Caco-2 (cell line): ENCODE measurements at regions of chr15 and their contacts with region 1.

Region 1: GRCh38 chr15:52790162-52790708 is at the start of gene ONECUT1:
- DNase-seq: peak; percentile 60 to 82
- H3K4me3 ChIP-seq: peak within 1 kb of the TSS; percentile 57
- H3K4me3 Mint-ChIP-seq: peak within 1 kb of the TSS; percentile 88
- H3K27ac Mint-ChIP-seq: no peak within 1 kb of the TSS
- H3K4me1 ChIP-seq: no peaks in the 10 kb centered on the region
- H3K4me1 Mint-ChIP-seq: no peaks in the 10 kb centered on the region
- H3K27me3 ChIP-seq: no peaks in the 10 kb centered on the region
- H3K27me3 Mint-ChIP-seq: peaks cover 5% of the 10 kb centered on the region
- CTCF ChIP-seq: no peak
- total RNA-seq, gene ONECUT1: 0.53 and 0.68 TPM in 2 replicates

Region 2: DNA sequence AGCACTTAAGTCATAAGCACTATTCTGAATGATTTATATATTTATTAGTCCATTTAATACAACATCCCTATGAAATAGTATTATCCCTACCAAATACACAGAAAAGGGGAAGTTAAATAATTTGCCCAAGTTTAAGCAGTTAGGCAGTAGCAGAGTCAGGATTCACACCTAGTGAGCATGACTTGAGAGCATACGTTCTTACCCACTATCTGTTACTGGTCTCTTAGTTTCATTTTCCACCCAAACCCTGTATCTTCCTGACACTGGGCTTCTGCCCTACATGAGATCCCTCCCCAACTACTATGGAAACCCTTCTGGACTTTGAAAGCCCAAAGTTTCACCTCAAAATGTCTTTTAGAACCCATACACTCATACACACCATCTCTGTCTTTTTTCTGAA is 106.7 kb before region 1 on chr15:
- CTCF ChIA-PET with region 1: no interaction called
- POLR2A ChIA-PET with region 1: no interaction called
- intact Hi-C with region 1: no loop called
- DNase-seq: no peak
- H3K4me3 ChIP-seq: no peak overlapping the region
- H3K4me3 Mint-ChIP-seq: no peak overlapping the region
- H3K27ac Mint-ChIP-seq: no peak overlapping the region
- H3K4me1 ChIP-seq: no peaks in the 10 kb centered on the region
- H3K4me1 Mint-ChIP-seq: no peaks in the 10 kb centered on the region
- H3K27me3 ChIP-seq: no peaks in the 10 kb centered on the region
- H3K27me3 Mint-ChIP-seq: peaks cover 8% of the 10 kb centered on the region
- CTCF ChIP-seq: no peak

Region 3: DNA sequence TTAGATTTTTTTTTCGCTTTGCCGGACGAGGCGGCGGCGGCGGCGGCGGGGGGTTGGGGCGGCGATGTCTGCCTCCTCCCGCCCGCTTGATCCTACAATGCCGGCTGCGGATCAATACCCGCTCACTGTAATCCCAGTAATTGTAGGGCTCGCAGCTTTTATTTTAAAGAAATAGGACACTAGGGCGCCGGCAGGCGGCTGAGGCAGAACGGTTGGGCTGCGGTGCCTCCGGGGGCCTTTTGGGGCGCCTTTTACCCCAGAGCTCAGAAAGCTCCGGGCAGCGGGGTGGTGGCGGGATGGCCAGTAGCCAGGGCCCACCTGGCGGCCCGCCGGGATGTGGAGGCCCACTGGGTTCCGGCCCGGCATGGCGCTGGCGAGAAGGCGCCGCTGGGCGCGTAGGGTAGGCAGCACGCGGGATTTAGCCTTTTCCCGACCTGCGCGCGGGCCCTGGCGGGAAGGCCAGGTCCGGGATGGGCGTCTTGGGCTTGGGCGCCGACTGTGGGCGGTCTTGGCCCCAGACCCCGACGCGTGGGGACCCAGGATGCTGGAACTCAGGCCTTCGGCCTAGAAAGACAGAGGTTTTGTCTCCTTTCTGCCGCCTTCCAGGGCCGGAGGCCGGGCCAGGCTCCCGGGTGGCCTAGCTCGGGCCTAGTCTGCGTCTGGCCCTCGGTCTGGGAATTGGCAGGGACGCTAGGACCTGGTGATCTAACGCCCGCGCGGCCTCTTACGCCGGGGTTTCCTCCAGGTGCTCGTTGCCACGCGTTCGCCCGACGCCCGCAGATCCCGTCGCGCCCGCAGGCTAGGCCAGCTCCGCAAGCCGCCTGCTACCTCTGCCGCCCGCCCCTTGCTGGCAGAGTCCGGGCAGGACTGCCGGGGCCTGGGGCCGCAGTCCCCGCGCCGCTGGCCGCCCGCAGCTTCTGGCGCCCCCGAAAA is 15.4 kb after region 1 on chr15:
- CTCF ChIA-PET with region 1: no interaction called
- POLR2A ChIA-PET with region 1: no interaction called
- intact Hi-C with region 1: no loop called
- DNase-seq: no peak
- H3K4me3 ChIP-seq: no peak overlapping the region
- H3K4me3 Mint-ChIP-seq: no peak overlapping the region
- H3K27ac Mint-ChIP-seq: no peak overlapping the region
- H3K4me1 ChIP-seq: no peaks in the 10 kb centered on the region
- H3K4me1 Mint-ChIP-seq: no peaks in the 10 kb centered on the region
- H3K27me3 ChIP-seq: no peaks in the 10 kb centered on the region
- H3K27me3 Mint-ChIP-seq: peaks cover under 1% of the 10 kb centered on the region
- CTCF ChIP-seq: no peak

Region 4: GRCh38 chr15:53586799-53587198 is 796.6 kb after region 1 on chr15:
- CTCF ChIA-PET with region 1: no interaction called
- POLR2A ChIA-PET with region 1: no interaction called
- intact Hi-C with region 1: loop called (anchors 5 kb)
- DNase-seq: peak; percentile 64 to 74
- H3K4me3 ChIP-seq: no peak overlapping the region
- H3K4me3 Mint-ChIP-seq: no peak overlapping the region
- H3K27ac Mint-ChIP-seq: no peak overlapping the region
- H3K4me1 ChIP-seq: no peaks in the 10 kb centered on the region
- H3K4me1 Mint-ChIP-seq: no peaks in the 10 kb centered on the region
- H3K27me3 ChIP-seq: no peaks in the 10 kb centered on the region
- H3K27me3 Mint-ChIP-seq: no peaks in the 10 kb centered on the region
- CTCF ChIP-seq: peak; percentile 63 to 66